Cardiac septum (tissue), 1 donor: ENCODE measurements at regions of chr13 and their contacts with region 1.

Region 1: DNA sequence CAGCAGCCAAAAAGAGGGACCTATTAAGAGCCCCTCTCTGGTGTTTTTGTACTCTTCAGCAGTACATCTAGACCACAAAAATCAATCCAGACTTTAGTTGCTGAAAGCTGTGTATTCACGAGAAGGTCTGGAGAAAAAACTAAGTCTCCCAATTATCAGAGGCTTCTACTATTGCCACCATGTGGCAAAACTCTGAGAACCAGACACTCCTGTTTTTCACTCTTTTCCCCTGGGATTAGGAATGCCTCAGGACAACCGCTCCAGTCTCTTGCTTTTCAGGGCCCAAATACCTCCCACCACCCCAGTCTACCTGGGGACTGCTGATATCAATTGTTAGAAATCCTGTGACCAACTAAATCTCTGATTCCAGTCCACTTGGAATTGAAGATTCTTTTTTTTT is 30.1 kb upstream of the OBI1 start:
- DNase-seq: no peak

Region 2: GRCh38 chr13:78241278-78241919 is 447.6 kb before region 1 on chr13:
- intact Hi-C with region 1: loop called (anchors 5 kb)
- DNase-seq: no peak